ENCODE measurements at regions of chr16 and their contacts with region 1.

Region 1: GRCh38 chr16:3611146-3611975 is at the start of gene SLX4:
- DNase-seq: peak; percentile 97
- H3K4me3 ChIP-seq: peak within 1 kb of the TSS; percentile 88
- H3K27ac ChIP-seq: peak within 1 kb of the TSS; percentile 90
- H3K4me1 ChIP-seq: peaks cover 67% of the 10 kb centered on the region
- CTCF ChIP-seq: no peak
- total RNA-seq, gene SLX4: 13.2 and 13.7 TPM in 2 replicates

Region 2: GRCh38 chr16:3467921-3468320 is 143.4 kb before region 1 on chr16:
- CTCF ChIA-PET with region 1: no interaction called
- POLR2A ChIA-PET with region 1: no interaction called
- intact Hi-C with region 1: no loop called
- DNase-seq: peak; percentile 14
- H3K4me3 ChIP-seq: no peak overlapping the region
- H3K27ac ChIP-seq: no peak overlapping the region
- H3K4me1 ChIP-seq: peaks cover 10% of the 10 kb centered on the region
- CTCF ChIP-seq: no peak

Region 3: GRCh38 chr16:3578610-3579551 is 32.5 kb before region 1 on chr16:
- CTCF ChIA-PET with region 1: no interaction called
- POLR2A ChIA-PET with region 1: interaction called, 11 read pairs
- intact Hi-C with region 1: loop called (anchors 1 kb)
- DNase-seq: peak; percentile 93
- H3K4me3 ChIP-seq: peak overlapping the region; percentile 71
- H3K27ac ChIP-seq: peak overlapping the region; percentile 94
- H3K4me1 ChIP-seq: peaks cover 62% of the 10 kb centered on the region
- CTCF ChIP-seq: no peak

Region 4: GRCh38 chr16:3587547-3588110 is 23.7 kb before region 1 on chr16:
- CTCF ChIA-PET with region 1: interaction called, 3 read pairs
- POLR2A ChIA-PET with region 1: interaction called, 10 read pairs
- intact Hi-C with region 1: loop called (anchors 2 kb)
- DNase-seq: peak; percentile 94
- H3K4me3 ChIP-seq: peak overlapping the region; percentile 46
- H3K27ac ChIP-seq: peak overlapping the region; percentile 95
- H3K4me1 ChIP-seq: peaks cover 40% of the 10 kb centered on the region
- CTCF ChIP-seq: no peak

Measured in OCI-LY7 (cell line).